ENCODE measurements at regions of chr9 and their contacts with region 1.

Region 1: DNA sequence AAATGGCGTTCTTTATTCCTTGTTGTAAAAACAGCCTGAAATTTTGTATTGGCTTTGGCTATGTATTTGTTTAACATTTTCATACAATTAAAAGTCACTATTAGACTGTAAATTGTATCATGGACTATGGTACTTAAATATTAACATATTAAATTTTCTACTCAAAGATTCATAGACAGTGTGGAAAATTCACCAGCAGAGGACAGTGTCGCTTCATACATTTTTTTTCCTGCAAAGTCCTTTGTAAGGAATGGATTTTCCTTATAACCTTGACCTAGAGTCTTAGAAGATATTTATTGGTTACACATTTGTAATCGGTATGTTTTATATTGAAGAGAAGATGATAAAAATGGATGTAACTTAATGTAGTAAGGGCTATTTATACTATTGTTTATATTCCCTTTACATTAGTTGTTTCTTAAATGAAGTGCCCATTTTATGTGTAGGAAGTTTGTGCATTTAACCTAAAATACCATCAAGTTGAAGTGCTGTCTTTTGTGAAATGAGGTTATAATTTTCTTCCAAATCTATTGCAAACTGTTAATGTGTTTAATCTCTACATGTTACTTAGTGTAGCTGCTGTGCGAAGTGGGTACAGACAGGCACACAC is 150.1 kb downstream of the KDM4C start:
- DNase-seq: peak; percentile 24
- ATAC-seq: peak; percentile 77
- H3K4me3 ChIP-seq: no peak overlapping the region
- H3K27ac ChIP-seq: no peak overlapping the region
- H3K4me1 ChIP-seq: peaks cover 1 to 2% of the 10 kb centered on the region in 2 experiments
- H3K27me3 ChIP-seq: no peaks in the 10 kb centered on the region
- CTCF ChIP-seq: peak; percentile 47 to 83 (median 59); a peak in 5 of 6 replicates
- POLR2A ChIP-seq: no peak
- RAD21 ChIP-seq: peak; percentile 65

Region 2: GRCh38 chr9:7053903-7054302 is 146.0 kb after region 1 on chr9:
- CTCF ChIA-PET with region 1: interaction called, 4 read pairs
- POLR2A ChIA-PET with region 1: no interaction called
- RAD21 ChIA-PET with region 1: no interaction called
- intact Hi-C with region 1: loop called (anchors 5 kb)
- DNase-seq: no peak
- ATAC-seq: no peak
- H3K4me3 ChIP-seq: no peak overlapping the region
- H3K27ac ChIP-seq: no peak overlapping the region
- H3K4me1 ChIP-seq: no peaks in the 10 kb centered on the region
- H3K27me3 ChIP-seq: no peaks in the 10 kb centered on the region
- CTCF ChIP-seq: no peak
- POLR2A ChIP-seq: no peak
- RAD21 ChIP-seq: no peak

Region 3: GRCh38 chr9:7172154-7173125 is 264.6 kb after region 1 on chr9:
- CTCF ChIA-PET with region 1: no interaction called
- POLR2A ChIA-PET with region 1: no interaction called
- RAD21 ChIA-PET with region 1: no interaction called
- intact Hi-C with region 1: loop called (anchors 5 kb)
- DNase-seq: no peak
- ATAC-seq: no peak
- H3K4me3 ChIP-seq: no peak overlapping the region
- H3K27ac ChIP-seq: no peak overlapping the region
- H3K4me1 ChIP-seq: no peaks in the 10 kb centered on the region
- H3K27me3 ChIP-seq: no peaks in the 10 kb centered on the region
- CTCF ChIP-seq: no peak
- POLR2A ChIP-seq: no peak
- RAD21 ChIP-seq: no peak

Region 4: DNA sequence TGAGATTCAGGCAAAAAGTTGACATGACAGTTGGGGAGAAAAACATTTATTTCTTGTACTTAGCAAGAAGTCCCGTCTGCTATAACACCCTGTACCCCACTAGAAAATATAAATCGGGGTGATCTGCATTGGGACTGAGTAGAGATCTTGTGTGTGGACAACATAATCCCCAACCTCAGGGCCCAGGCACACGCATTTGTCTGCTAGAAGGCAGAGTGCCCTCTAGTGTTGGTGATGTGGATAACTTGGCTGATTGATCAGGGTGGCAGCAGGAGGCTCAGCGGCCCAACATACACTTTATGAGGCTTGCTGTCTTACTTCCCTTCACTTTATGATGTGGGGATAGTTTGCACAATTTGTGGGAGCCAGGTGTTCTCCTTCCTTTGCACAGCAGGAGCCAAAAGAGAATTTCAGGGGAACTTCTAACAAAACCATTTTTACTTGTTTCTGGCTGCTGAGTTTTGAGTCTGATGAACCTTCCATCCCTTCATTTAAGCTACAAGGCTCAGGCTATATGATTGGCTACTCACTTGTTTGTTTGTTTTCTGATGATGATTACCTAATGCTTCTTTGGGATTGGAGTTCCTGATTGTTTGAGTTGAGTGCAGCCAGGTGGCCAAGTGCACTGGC is 628.5 kb after region 1 on chr9:
- CTCF ChIA-PET with region 1: no interaction called
- POLR2A ChIA-PET with region 1: no interaction called
- RAD21 ChIA-PET with region 1: no interaction called
- intact Hi-C with region 1: loop called (anchors 1 kb)
- DNase-seq: peak; percentile 18
- ATAC-seq: peak; percentile 94
- H3K4me3 ChIP-seq: no peak overlapping the region
- H3K27ac ChIP-seq: no peak overlapping the region
- H3K4me1 ChIP-seq: no peaks in the 10 kb centered on the region
- H3K27me3 ChIP-seq: peaks cover 4% of the 10 kb centered on the region; the same call in 1 of the 2 replicates
- CTCF ChIP-seq: peak; percentile 30 to 77 (median 76); a peak in 5 of 6 replicates
- POLR2A ChIP-seq: no peak
- RAD21 ChIP-seq: peak; percentile 55; the same call in 1 of the 2 replicates

Region 5: DNA sequence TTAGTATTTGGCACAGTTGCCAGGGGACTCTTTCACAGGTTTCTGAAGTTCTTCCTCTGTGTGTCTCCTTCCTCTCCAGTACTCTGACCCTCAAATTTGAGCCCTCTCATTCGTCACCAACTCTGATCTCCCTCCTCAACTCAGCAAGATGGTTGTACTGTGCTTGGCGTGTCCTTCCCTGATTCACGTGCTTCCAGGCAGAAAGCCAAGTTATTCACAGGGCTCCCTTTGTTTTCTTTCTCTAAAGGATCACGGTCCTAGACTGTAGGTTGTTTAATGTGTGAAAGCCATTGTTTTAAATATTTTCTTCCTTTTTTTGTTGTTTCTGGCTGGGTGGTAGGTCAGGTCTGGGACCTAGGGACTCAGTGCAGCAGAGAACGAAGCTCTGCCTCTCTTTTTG is 748.8 kb after region 1 on chr9:
- CTCF ChIA-PET with region 1: no interaction called
- POLR2A ChIA-PET with region 1: no interaction called
- RAD21 ChIA-PET with region 1: no interaction called
- intact Hi-C with region 1: loop called (anchors 5 kb)
- DNase-seq: no peak
- ATAC-seq: 0 out of 2 replicates have a peak, but pooled peaks have one; percentile 42
- H3K4me3 ChIP-seq: no peak overlapping the region
- H3K27ac ChIP-seq: no peak overlapping the region
- H3K4me1 ChIP-seq: no peaks in the 10 kb centered on the region
- H3K27me3 ChIP-seq: no peaks in the 10 kb centered on the region
- CTCF ChIP-seq: no peak
- POLR2A ChIP-seq: no peak
- RAD21 ChIP-seq: no peak

Measured in HCT116 (cell line).